Activated CD4-positive, alpha-beta T cell treated with anti-CD3 and anti-CD28 coated beads for 36 hours (primary cell): ENCODE measurements at regions of chr1 and their contacts with region 1.

Region 1: DNA sequence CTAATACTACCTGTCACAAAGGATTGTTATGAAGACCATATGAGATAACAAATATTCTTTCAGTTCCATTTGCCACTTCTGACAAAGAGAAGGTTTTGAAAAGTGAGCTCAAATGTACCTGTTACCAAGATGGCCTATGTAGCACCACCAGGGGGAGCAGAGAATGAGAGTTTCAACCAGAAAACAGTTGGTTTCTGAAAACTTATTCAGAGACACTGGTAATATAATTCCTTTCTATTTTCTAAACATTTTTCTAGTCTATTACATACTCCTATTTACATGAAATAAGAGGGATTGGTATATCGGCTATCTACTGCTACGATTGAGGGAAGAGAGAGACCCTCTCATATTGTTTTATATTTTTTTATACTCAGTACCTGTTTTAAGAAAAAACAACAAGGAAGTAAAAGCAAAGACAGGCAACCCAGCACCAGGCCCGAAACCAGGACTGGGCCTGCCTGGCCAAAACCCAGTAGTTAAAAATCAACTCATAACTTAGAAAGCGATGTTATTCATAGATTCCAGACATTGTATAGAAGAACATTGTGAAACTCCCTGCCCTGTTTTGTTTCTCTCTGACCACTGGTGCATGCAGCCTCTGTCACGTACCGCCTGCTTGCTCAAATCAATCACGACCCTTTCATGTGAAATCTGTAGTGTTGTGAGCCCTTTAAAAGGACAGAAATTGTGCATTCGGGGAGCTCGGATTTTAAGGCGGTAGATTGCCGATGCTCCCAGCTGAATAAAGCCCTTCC is 48.3 kb downstream of the IL23R start:
- DNase-seq: peak; percentile 75
- ATAC-seq: peak; percentile 48
- H3K4me3 Mint-ChIP-seq: no peak overlapping the region
- H3K27ac Mint-ChIP-seq: peak overlapping the region; percentile 19
- H3K4me1 Mint-ChIP-seq: peaks cover 46% of the 10 kb centered on the region
- H3K27me3 Mint-ChIP-seq: no peaks in the 10 kb centered on the region

Region 2: DNA sequence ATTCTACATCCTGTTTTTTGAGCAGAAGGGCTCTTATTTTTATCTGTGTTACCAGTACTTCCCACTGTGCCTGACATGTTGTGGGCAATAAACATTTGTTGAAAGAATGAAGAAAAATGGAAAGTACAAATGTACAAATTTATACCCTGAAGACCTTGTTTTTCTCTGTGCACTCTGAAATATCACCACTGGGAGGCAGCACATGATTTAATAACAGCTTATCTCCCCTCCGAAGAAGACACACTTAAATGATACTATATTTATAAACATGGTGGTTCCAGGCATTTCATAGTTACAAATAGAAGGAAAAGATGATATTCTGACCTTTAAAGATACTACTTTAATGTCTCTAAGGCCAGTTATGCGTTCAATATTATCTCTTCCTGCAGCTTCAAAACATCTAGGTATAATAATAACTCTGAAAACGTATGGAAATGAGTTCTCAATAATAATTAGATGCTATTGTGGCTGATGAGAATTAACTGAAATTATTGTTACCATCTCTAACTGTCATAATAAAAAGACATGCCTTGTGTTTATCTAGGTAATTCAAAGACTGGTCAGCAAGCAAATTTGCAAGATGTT is 449.5 kb before region 1 on chr1:
- CTCF ChIA-PET with region 1: interaction called, 7 read pairs
- POLR2A ChIA-PET with region 1: no interaction called
- intact Hi-C with region 1: loop called (anchors 1 to 2 kb)
- DNase-seq: peak; percentile 69
- ATAC-seq: peak; percentile 62
- H3K4me3 Mint-ChIP-seq: no peak overlapping the region
- H3K27ac Mint-ChIP-seq: no peak overlapping the region
- H3K4me1 Mint-ChIP-seq: peaks cover 22% of the 10 kb centered on the region
- H3K27me3 Mint-ChIP-seq: no peaks in the 10 kb centered on the region

Region 3: DNA sequence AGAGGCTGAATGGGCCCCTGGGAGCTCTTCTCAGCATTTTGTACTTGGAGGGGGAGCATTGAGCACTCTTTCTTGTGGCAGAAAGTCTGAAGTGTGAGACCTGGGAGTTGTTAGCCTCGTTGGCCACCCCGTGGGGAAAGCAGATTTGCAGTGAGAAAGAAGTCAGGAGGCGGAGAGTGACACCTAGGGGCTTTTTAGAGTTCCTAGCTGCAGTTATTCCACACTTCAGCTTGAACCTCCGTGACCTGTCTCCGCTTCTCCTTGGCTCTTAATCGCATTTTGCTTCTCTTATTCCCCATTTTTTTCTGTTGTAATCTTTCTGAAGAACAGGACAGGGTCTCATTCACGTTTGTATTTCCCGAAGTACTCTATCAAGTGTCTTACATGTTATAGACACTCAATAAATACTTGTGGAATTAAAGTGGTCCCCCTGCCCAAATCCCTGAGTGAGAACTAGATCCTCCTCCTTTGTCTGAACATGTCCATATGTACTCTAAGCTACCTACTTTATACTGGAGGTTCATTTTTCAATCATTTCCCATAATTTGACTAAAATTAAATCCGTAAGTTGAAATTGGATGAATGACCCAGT is 65.3 kb before region 1 on chr1:
- CTCF ChIA-PET with region 1: interaction called, 153 read pairs
- POLR2A ChIA-PET with region 1: interaction called, 7 read pairs
- intact Hi-C with region 1: loop called (anchors 1 kb)
- DNase-seq: peak; percentile 78
- ATAC-seq: peak; percentile 90
- H3K4me3 Mint-ChIP-seq: no peak overlapping the region
- H3K27ac Mint-ChIP-seq: peak overlapping the region; percentile 64
- H3K4me1 Mint-ChIP-seq: peaks cover 34% of the 10 kb centered on the region
- H3K27me3 Mint-ChIP-seq: peaks cover 16% of the 10 kb centered on the region

Region 4: GRCh38 chr1:67194209-67194863 is 20.3 kb before region 1 on chr1:
- CTCF ChIA-PET with region 1: interaction called, 37 read pairs
- POLR2A ChIA-PET with region 1: interaction called, 7 read pairs
- intact Hi-C with region 1: loop called in 1 of 2 experiments (anchors 1 kb)
- DNase-seq: no peak
- ATAC-seq: peak; percentile 24
- H3K4me3 Mint-ChIP-seq: no peak overlapping the region
- H3K27ac Mint-ChIP-seq: peak overlapping the region; percentile 60
- H3K4me1 Mint-ChIP-seq: peaks cover 21% of the 10 kb centered on the region
- H3K27me3 Mint-ChIP-seq: no peaks in the 10 kb centered on the region

Region 5: GRCh38 chr1:67256291-67257172 is 41.9 kb after region 1 on chr1:
- CTCF ChIA-PET with region 1: no interaction called
- POLR2A ChIA-PET with region 1: no interaction called
- intact Hi-C with region 1: no loop called
- DNase-seq: no peak
- ATAC-seq: no peak
- H3K4me3 Mint-ChIP-seq: no peak overlapping the region
- H3K27ac Mint-ChIP-seq: no peak overlapping the region
- H3K4me1 Mint-ChIP-seq: peaks cover 1% of the 10 kb centered on the region
- H3K27me3 Mint-ChIP-seq: peaks cover 2% of the 10 kb centered on the region

Region 6: DNA sequence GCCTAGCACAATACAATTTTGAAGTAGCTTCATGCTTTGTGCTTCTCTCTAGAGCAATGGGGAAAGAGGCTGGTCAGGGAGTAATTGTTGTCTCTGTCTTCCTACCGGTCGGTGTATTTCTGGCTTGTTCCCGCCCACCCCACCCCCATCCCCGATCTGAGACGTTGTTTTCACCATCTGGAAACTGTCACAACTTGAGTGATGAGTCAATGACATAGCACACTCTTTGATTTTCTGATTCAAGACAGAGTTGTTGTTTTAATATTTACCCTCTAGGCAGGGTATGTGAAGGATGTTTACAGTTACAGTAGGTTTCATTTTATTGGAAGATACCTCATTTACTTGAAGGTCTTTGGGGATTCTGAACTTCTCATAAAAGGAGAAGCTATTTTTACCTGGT is 100.1 kb after region 1 on chr1:
- CTCF ChIA-PET with region 1: interaction called, 10 read pairs
- POLR2A ChIA-PET with region 1: interaction called, 4 read pairs
- intact Hi-C with region 1: no loop called
- DNase-seq: peak; percentile 38
- ATAC-seq: peak; percentile 76
- H3K4me3 Mint-ChIP-seq: peak overlapping the region; percentile 38
- H3K27ac Mint-ChIP-seq: peak overlapping the region; percentile 89
- H3K4me1 Mint-ChIP-seq: peaks cover 43% of the 10 kb centered on the region
- H3K27me3 Mint-ChIP-seq: no peaks in the 10 kb centered on the region

Region 7: DNA sequence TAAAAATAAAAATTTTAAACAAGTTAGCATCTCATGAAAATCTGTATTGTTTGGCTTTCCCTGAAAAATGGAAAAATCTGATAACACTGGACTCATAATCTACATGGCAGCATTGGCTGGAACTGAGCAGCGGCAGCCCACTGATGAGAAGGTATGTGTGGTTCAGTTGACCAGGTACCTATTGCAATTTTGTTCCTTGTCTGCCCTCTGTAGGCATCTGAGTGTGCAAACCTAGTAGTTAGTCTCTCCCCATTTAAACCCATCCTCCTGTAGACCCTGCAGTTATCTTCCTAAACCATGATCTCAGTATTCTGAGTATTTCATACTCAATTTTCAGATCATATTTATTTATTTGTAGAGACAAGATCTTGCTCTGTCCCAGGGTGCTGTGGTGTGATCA is 275.0 kb after region 1 on chr1:
- CTCF ChIA-PET with region 1: interaction called, 25 read pairs
- POLR2A ChIA-PET with region 1: no interaction called
- intact Hi-C with region 1: no loop called
- DNase-seq: peak; percentile 21
- ATAC-seq: peak; percentile 79
- H3K4me3 Mint-ChIP-seq: no peak overlapping the region
- H3K27ac Mint-ChIP-seq: no peak overlapping the region
- H3K4me1 Mint-ChIP-seq: peaks cover under 1% of the 10 kb centered on the region
- H3K27me3 Mint-ChIP-seq: no peaks in the 10 kb centered on the region

Region 8: DNA sequence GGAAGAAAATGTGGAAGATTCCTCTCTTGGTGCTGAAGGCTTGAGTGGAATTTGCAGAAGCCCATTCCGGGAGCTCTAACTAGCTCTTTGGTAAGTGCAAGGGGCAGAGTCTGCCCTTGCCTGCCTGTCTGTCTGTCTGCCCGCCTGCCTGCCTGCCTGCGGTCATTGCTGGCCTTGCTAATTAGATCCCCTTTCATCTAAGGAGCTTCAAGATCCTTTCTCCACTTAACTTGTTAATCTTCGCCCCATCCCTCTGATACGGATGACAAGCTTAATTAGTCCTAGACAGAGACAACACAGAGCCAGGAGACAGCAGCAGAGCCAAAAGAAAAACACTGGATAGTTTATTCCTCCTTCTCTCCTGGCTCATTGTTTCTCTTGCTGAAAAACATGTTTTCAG is 390.2 kb after region 1 on chr1:
- CTCF ChIA-PET with region 1: no interaction called
- POLR2A ChIA-PET with region 1: no interaction called
- intact Hi-C with region 1: no loop called
- DNase-seq: no peak
- ATAC-seq: no peak
- H3K4me3 Mint-ChIP-seq: no peak overlapping the region
- H3K27ac Mint-ChIP-seq: no peak overlapping the region
- H3K4me1 Mint-ChIP-seq: peaks cover 5% of the 10 kb centered on the region
- H3K27me3 Mint-ChIP-seq: peaks cover 4% of the 10 kb centered on the region

Region 9: GRCh38 chr1:68378296-68379084 is 1163.9 kb after region 1 on chr1:
- CTCF ChIA-PET with region 1: no interaction called
- POLR2A ChIA-PET with region 1: no interaction called
- intact Hi-C with region 1: no loop called
- DNase-seq: no peak
- ATAC-seq: no peak
- H3K4me3 Mint-ChIP-seq: no peak overlapping the region
- H3K27ac Mint-ChIP-seq: no peak overlapping the region
- H3K4me1 Mint-ChIP-seq: no peaks in the 10 kb centered on the region
- H3K27me3 Mint-ChIP-seq: no peaks in the 10 kb centered on the region

Region 10: GRCh38 chr1:68551459-68551858 is 1336.9 kb after region 1 on chr1:
- CTCF ChIA-PET with region 1: no interaction called
- POLR2A ChIA-PET with region 1: no interaction called
- intact Hi-C with region 1: no loop called
- DNase-seq: no peak
- ATAC-seq: no peak
- H3K4me3 Mint-ChIP-seq: no peak overlapping the region
- H3K27ac Mint-ChIP-seq: no peak overlapping the region
- H3K4me1 Mint-ChIP-seq: no peaks in the 10 kb centered on the region
- H3K27me3 Mint-ChIP-seq: no peaks in the 10 kb centered on the region